ENCODE measurements at regions of chr20 and their contacts with region 1.

Region 1: GRCh38 chr20:57398231-57398821 is 7.1 kb downstream of the RBM38 start:
- DNase-seq: peak; percentile 88 to 98 (median 94)
- ATAC-seq: peak; percentile 74 to 81
- H3K4me3 Mint-ChIP-seq: peak overlapping the region; percentile 79 to 96 (median 89)
- H3K27ac Mint-ChIP-seq: peak overlapping the region; percentile 95 to 100 (median 98)
- H3K4me1 Mint-ChIP-seq: peaks cover 47 to 98% (median 97%) of the 10 kb centered on the region in 4 donors
- H3K27me3 Mint-ChIP-seq: no peaks in the 10 kb centered on the region

Region 2: DNA sequence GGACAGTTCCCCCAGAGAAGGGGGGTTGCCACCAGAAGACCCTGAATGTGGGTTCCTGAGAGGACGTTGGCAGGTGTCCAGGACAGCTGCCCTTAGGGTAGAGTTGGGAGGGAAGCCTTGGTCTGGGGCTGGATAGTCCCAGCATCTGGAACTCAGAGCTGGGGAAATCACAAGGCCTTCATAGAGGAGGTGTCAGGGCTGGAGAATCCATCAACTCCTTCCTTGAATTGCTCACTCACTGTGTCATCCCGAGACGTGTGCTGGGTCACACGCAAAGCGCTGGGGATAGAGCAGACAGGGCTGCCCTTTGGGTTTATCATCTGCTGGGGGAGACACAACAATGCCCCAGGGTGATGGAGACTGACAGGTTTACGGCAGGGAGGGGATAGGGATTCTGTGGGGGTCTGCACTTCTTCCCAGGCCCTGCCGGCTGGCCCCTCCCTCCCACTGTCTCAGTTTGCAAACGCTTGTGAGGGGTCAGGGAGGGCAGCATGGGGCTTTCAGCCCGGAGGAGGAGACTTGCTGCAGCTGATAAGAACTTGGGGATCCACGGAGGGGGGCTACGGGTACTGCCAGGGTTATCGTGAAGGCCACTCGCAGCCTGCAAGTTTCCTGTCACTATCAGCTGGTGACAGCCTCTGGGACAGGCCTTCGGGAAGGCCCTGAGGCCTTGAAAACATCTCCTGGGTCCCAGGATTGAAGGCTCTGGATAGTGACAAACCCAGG is 11.5 kb after region 1 on chr20:
- POLR2A ChIA-PET with region 1: interaction called, 218 read pairs
- DNase-seq: peak in 1 of 10 donors; percentile 28
- ATAC-seq: peak in 1 of 2 donors; percentile 2
- H3K4me3 Mint-ChIP-seq: peak overlapping the region in 4 of 10 donors; percentile 12 to 53 (median 50)
- H3K27ac Mint-ChIP-seq: peak overlapping the region in 6 of 10 donors; percentile 11 to 96 (median 64)
- H3K4me1 Mint-ChIP-seq: peaks cover 21 to 50% (median 46%) of the 10 kb centered on the region in 4 donors
- H3K27me3 Mint-ChIP-seq: no peaks in the 10 kb centered on the region

Region 3: DNA sequence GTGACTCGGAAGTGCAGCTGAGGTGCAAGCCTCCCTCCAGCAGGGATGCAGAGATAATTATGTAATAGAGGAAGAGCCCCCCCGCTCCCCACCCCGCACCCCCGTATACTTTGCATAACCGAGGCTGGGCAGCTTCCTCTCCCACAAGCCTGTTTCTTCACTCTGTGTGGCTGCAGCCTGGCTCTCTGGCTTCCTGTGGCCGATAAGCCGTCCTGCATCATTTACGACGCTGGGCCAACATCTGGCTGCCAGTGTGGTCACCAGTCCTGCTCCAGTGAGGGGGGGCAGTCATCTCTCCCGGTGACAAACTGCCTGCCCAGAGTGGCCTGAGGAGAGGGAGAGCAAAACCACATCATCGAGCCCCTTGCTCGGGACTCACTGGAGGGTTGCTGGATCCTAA is 52.1 kb after region 1 on chr20:
- POLR2A ChIA-PET with region 1: interaction called, 10 read pairs
- DNase-seq: peak in 4 of 10 donors; percentile 20 to 40 (median 37)
- ATAC-seq: peak; percentile 65 to 74
- H3K4me3 Mint-ChIP-seq: peak overlapping the region; percentile 59 to 81 (median 67)
- H3K27ac Mint-ChIP-seq: peak overlapping the region; percentile 52 to 93 (median 80)
- H3K4me1 Mint-ChIP-seq: peaks cover 42 to 51% (median 49%) of the 10 kb centered on the region in 4 donors
- H3K27me3 Mint-ChIP-seq: peaks cover 0 to 3% (median 0%) of the 10 kb centered on the region in 5 donors

Region 4: GRCh38 chr20:57480444-57481160 is 82.3 kb after region 1 on chr20:
- POLR2A ChIA-PET with region 1: interaction called, 15 read pairs
- DNase-seq: peak; percentile 18 to 81 (median 50)
- ATAC-seq: peak; percentile 88 to 91
- H3K4me3 Mint-ChIP-seq: peak overlapping the region; percentile 53 to 85 (median 75)
- H3K27ac Mint-ChIP-seq: peak overlapping the region; percentile 66 to 92 (median 84)
- H3K4me1 Mint-ChIP-seq: peaks cover 13 to 65% (median 38%) of the 10 kb centered on the region in 4 donors
- H3K27me3 Mint-ChIP-seq: peaks cover 0 to 2% (median 0%) of the 10 kb centered on the region in 5 donors

Region 5: DNA sequence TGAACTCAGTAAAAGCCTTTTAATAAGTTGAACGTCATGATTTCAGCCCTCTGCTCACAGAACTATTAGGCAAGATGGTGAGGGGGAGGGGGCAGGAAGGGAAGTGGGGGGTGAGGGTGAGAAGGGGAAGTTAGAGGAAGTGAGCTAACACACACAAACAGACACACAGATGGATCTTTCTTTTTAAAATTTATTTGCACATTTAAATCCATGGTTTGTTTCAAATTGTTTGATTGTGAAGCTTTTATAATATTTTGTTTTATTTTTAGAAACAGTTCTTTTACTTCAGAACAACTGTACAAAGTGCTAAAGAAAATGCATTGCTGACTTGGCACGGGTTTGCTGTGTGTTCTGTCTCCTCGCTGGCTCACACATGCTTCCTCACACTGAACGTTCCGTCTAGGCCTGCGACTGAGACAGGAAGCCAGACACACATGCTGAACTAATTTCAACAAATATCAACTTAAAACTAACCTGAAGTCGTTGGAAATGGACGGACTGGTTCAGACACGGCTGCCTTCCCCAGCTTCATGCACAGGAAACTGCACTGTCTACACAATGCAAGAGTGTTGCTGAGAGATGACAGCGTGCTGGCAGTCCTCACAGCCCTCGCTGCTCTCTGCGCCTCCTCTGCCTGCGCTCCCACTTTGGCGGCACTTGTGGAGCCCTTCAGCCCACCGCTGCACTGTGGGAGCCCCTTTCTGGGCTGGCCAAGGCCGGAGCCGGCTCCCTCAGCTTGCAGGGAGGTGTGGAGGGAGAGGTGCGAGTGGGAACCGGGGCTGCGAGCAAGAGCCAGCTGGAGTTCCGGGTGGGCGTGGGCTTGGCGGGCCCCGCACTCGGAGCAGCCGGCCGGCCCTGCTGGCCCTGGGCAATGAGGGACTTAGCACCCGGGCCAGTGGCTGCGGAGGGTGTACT is 230.0 kb after region 1 on chr20:
- POLR2A ChIA-PET with region 1: interaction called, 32 read pairs
- DNase-seq: peak in 9 of 10 donors; percentile 53 to 86 (median 59)
- ATAC-seq: peak; percentile 80 to 84
- H3K4me3 Mint-ChIP-seq: peak overlapping the region; percentile 77 to 96 (median 89)
- H3K27ac Mint-ChIP-seq: peak overlapping the region; percentile 93 to 99 (median 98)
- H3K4me1 Mint-ChIP-seq: peaks cover 31 to 86% (median 74%) of the 10 kb centered on the region in 4 donors
- H3K27me3 Mint-ChIP-seq: no peaks in the 10 kb centered on the region